Right cardiac atrium (tissue), 5 donors: ENCODE measurements at regions of chr3 and their contacts with region 1.

Region 1: DNA sequence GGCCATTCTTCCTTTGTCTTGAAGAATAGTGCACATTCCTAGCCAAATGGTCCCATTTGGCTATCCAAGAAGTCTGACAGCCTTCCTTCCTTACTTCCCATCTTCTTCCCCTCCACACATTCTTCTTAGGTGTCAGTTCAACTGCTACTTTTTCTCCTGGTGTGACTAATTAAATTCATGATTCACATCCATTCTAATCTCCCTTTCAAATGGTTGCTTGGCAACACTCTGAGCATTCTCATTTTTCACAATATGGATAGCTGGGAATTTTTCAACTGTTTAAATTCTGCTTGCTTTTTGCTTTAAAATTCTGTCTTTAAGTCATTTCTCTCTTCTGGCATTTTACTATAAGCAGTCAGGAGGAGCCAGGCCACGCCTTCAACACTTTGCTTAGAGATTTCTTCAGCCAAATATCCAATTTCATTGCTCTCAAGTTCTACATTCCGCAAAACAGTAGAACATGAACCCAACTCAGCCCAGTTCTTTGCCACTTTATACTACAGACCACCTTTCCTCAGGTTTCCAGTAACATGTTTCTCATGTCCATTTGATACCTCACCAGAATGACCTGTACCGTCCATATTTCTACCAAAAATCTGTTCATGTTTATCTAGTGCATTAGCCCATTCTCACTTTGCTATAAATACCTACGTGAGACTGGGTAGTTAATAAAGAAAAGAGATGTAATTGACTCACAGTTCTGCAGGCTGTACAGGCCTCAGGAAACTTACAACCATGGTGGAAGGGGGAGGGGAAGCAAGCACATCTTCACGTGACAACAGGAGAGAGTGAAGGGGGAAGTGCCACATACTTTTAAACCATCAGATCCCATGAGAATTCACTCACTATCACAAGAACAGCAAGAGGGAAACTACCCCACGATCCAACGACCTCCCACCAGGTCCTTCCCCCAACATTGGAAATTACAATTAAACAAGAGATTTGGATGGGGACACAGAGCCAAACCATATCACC is 31.9 kb upstream of the MCF2L2 start:
- DNase-seq: no peak
- ATAC-seq: no peak
- H3K4me3 ChIP-seq: no peak overlapping the region
- H3K27ac ChIP-seq: no peak overlapping the region
- H3K4me1 ChIP-seq: no peaks in the 10 kb centered on the region
- H3K27me3 ChIP-seq: no peaks in the 10 kb centered on the region

Region 2: GRCh38 chr3:183537295-183537730 is 76.9 kb after region 1 on chr3:
- intact Hi-C with region 1: no loop called
- DNase-seq: peak in 2 of 3 donors; percentile 39 to 63
- ATAC-seq: peak; percentile 64 to 67
- H3K4me3 ChIP-seq: no peak overlapping the region
- H3K27ac ChIP-seq: no peak overlapping the region
- H3K4me1 ChIP-seq: no peaks in the 10 kb centered on the region
- H3K27me3 ChIP-seq: no peaks in the 10 kb centered on the region

Region 3: DNA sequence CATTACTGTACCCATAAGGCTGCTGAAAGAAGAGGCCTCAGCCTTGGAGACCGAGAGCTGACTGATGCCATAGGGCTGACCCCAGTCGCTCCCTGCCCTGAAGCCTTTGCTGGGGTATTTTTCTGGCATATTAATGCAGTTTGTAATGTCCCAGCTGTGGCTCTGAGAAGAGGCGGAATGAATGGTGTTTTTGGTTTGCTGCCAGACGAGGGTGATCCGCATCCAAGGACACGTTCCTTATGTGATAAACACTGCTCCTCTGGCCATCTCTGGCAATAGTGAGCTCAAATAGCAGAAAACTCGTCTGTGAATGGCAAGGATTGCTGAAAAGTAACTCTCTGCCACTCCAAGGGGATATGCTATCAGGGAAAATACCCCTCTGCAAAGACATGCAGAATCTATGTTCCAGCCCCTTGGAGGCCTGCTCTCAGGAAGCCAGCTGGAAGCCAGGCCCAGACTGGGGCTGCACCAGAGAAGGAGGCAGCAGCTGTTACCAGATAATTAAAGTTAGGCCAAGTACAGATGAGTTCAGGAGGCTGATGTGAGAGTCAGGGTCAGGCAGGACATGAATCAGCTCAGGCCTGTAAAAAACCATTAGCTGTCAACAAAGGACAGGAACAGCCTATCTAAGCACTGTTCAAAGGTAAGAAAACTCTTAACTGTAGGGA is 124.0 kb after region 1 on chr3:
- intact Hi-C with region 1: loop called in 1 of 4 experiments (anchors 10 kb)
- DNase-seq: peak; percentile 61 to 83 (median 83)
- ATAC-seq: peak; percentile 77 to 87
- H3K4me3 ChIP-seq: no peak overlapping the region
- H3K27ac ChIP-seq: peak overlapping the region; percentile 69
- H3K4me1 ChIP-seq: peaks cover 11% of the 10 kb centered on the region
- H3K27me3 ChIP-seq: no peaks in the 10 kb centered on the region